ENCODE measurements at regions of chr4 and their contacts with region 1.

Region 1: DNA sequence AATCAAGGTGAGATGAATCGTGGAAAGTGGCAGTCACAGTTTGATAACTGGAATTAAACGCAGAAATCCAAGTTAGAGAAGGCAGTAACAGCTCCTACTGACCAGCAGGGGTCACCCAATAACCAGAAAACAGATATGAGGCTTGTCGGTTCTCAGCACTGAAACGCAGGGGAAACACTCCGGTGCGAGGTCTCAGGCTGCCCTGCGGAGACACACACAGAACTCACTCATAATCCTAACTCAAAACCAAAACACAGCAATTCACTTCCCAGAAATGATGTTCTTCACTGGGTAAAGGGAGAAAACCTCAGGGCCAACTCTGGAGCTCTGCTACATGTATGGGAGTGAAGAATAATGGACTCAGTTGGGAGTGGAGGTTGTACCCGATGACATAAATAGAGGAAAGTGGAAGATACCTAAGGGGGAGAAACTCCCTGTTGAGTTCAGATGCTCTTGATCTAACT is 384.4 kb downstream of the RAPGEF2 start:
- DNase-seq: peak; percentile 65
- ATAC-seq: peak; percentile 97
- H3K4me3 ChIP-seq: 0 out of 4 replicates have a peak overlapping the region, but pooled peaks have one; percentile 7 to 23
- H3K27ac ChIP-seq: no peak overlapping the region
- H3K4me1 ChIP-seq: peaks cover 0 to 4% of the 10 kb centered on the region in 2 experiments; a peak in 1 of 4 replicates
- H3K27me3 ChIP-seq: no peaks in the 10 kb centered on the region
- CTCF ChIP-seq: peak; percentile 45 to 90 (median 74); a peak in 5 of 6 replicates
- POLR2A ChIP-seq: no peak
- RAD21 ChIP-seq: peak; percentile 91

Region 2: GRCh38 chr4:159097785-159098184 is 389.5 kb before region 1 on chr4:
- CTCF ChIA-PET with region 1: no interaction called
- POLR2A ChIA-PET with region 1: no interaction called
- RAD21 ChIA-PET with region 1: no interaction called
- intact Hi-C with region 1: no loop called
- DNase-seq: no peak
- ATAC-seq: no peak
- H3K4me3 ChIP-seq: no peak overlapping the region
- H3K27ac ChIP-seq: no peak overlapping the region
- H3K4me1 ChIP-seq: peaks cover 0 to 25% of the 10 kb centered on the region in 2 experiments; a peak in 2 of 4 replicates
- H3K27me3 ChIP-seq: no peaks in the 10 kb centered on the region
- CTCF ChIP-seq: no peak
- POLR2A ChIP-seq: no peak
- RAD21 ChIP-seq: no peak

Region 3: DNA sequence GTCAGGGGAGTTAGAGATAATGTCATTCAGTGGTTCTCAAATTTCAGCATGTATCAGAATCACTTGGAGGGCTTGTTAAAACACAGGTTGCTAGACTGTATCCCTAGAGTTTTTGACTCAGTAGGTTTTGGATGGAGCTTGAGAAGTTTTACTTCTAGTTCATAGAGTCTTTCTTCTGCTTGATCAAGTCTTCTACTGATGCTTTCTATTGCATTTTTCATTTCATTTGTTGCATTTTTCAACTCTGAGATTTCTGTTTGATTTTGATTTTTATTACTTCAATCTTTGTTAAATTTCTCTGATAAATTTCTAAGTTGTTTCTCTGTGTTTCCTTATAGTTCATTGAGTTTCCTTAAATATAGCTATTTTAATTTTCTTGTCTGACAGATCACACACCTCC is 23.0 kb before region 1 on chr4:
- CTCF ChIA-PET with region 1: no interaction called
- POLR2A ChIA-PET with region 1: no interaction called
- RAD21 ChIA-PET with region 1: no interaction called
- intact Hi-C with region 1: no loop called
- DNase-seq: no peak
- ATAC-seq: no peak
- H3K4me3 ChIP-seq: no peak overlapping the region
- H3K27ac ChIP-seq: no peak overlapping the region
- H3K4me1 ChIP-seq: no peaks in the 10 kb centered on the region
- H3K27me3 ChIP-seq: no peaks in the 10 kb centered on the region
- CTCF ChIP-seq: no peak
- POLR2A ChIP-seq: no peak
- RAD21 ChIP-seq: no peak

Region 4: DNA sequence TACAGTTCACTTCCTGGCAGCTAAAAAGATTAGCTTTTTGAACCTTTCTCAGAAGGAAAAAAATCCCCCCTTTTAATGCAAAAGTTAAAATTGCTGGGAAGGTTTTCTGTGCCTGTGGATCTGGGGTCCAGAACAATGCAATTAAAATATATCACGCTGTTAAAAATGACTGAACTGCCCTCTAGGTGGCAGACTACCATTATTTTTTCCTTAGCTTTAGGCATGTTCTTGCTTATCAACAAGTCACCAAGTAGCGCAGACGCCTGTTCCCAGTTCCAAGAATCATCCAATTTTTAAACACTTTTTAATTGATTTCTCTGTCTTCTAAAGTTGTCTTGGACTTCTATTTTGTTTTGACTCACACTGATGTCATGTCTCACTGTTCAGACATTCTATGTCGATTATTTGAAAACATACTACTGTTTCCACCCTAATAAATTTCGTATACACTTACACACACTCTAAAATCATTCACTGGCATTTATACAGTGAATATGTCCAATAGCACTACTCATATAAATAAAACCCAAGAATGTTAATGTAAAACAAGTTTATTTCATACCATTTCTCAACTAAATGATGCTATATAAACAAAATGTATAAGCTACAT is 277.1 kb after region 1 on chr4:
- CTCF ChIA-PET with region 1: no interaction called
- POLR2A ChIA-PET with region 1: no interaction called
- RAD21 ChIA-PET with region 1: no interaction called
- intact Hi-C with region 1: loop called (anchors 2 kb)
- DNase-seq: peak; percentile 62
- ATAC-seq: peak; percentile 90
- H3K4me3 ChIP-seq: no peak overlapping the region
- H3K27ac ChIP-seq: no peak overlapping the region
- H3K4me1 ChIP-seq: no peaks in the 10 kb centered on the region
- H3K27me3 ChIP-seq: no peaks in the 10 kb centered on the region
- CTCF ChIP-seq: peak; percentile 33 to 69 (median 47); a peak in 5 of 6 replicates
- POLR2A ChIP-seq: no peak
- RAD21 ChIP-seq: peak; percentile 69

Region 5: DNA sequence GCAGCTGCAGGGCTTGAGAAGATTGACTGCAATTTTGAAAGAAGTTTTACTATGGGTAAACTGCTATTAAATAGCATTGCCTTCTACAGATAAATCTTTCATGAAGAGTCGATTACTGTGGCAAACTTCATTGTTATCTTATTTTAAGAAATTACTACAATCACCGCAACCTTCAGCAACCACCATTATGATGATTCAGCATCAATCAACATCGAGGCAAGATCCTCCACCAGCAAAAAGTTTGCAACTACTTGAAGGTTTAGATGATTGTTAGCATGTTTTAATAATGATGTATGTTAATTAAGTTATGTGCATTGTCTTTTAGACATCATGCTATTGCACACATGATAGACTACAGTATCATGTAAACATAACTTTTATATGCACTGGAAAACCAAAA is 1165.5 kb after region 1 on chr4:
- CTCF ChIA-PET with region 1: no interaction called
- POLR2A ChIA-PET with region 1: no interaction called
- RAD21 ChIA-PET with region 1: no interaction called
- intact Hi-C with region 1: loop called (anchors 10 kb)
- DNase-seq: no peak
- ATAC-seq: no peak
- H3K4me3 ChIP-seq: no peak overlapping the region
- H3K27ac ChIP-seq: no peak overlapping the region
- H3K4me1 ChIP-seq: no peaks in the 10 kb centered on the region
- H3K27me3 ChIP-seq: no peaks in the 10 kb centered on the region
- CTCF ChIP-seq: no peak
- POLR2A ChIP-seq: no peak
- RAD21 ChIP-seq: no peak

Measured in HCT116 (cell line).